AG04450 (cell line): ENCODE measurements at regions of chr9 and their contacts with region 1.

Region 1: GRCh38 chr9:111743275-111743674 is 51.5 kb downstream of the SHOC1 start:
- DNase-seq: peak; percentile 13
- H3K4me3 ChIP-seq: no peak overlapping the region
- H3K27ac ChIP-seq: no peak overlapping the region
- H3K27me3 ChIP-seq: no peaks in the 10 kb centered on the region
- CTCF ChIP-seq: no peak

Region 2: DNA sequence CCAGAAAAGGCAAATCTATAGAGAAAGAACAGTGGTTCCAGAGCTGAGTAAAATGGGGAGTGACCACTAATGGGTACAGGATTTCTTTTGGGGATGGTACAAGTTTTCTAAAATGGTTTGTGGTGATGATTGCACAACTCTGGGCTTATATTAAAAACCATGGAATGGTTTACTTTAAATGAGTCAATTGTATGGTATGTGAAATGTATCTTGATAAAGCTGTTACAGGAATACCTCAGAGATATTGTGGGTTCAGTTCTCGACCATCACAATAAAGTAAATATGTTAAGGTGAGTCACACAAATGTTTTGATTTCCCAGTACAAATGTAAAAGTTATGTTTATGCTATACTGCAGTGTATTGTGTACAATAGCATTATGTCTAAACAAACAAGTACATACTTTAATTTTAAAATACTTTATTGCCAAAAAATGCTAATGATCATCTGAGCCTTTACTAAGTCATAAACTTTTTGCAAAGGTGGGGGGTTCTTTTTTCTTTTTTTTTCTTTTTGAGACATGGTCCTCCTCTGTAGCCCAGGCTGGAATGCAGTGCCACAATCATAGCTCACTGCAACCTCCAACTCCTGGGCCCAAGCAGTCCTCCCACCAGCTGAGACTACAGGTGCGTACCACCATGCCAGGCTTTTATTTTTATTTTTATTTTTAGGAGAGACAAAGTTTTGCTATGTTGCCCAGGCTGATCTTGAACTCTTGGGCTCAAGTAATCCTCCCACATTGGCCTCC is 14.5 kb before region 1 on chr9:
- CTCF ChIA-PET with region 1: no interaction called
- POLR2A ChIA-PET with region 1: interaction called, 10 read pairs
- DNase-seq: peak; percentile 91
- H3K4me3 ChIP-seq: no peak overlapping the region
- H3K27ac ChIP-seq: peak overlapping the region; percentile 21
- H3K27me3 ChIP-seq: no peaks in the 10 kb centered on the region
- CTCF ChIP-seq: no peak